Panc1 (cell line): ENCODE measurements at regions of chr1 and their contacts with region 1.

Region 1: GRCh38 chr1:46948629-46949274 is 7.5 kb upstream of the CYP4A11 start:
- DNase-seq: no peak
- ATAC-seq: no peak
- H3K4me3 ChIP-seq: no peak overlapping the region
- H3K27ac ChIP-seq: no peak overlapping the region
- H3K4me1 ChIP-seq: no peaks in the 10 kb centered on the region
- H3K27me3 ChIP-seq: no peaks in the 10 kb centered on the region; the same call in 1 of the 2 replicates
- CTCF ChIP-seq: no peak

Region 2: GRCh38 chr1:46653405-46653958 is 295.3 kb before region 1 on chr1:
- CTCF ChIA-PET with region 1: interaction called, 10 read pairs
- POLR2A ChIA-PET with region 1: no interaction called
- in situ Hi-C with region 1: no loop called
- intact Hi-C with region 1: no loop called
- DNase-seq: no peak
- ATAC-seq: no peak
- H3K4me3 ChIP-seq: no peak overlapping the region
- H3K27ac ChIP-seq: peak overlapping the region; percentile 52
- H3K4me1 ChIP-seq: peaks cover 5% of the 10 kb centered on the region; the same call in 1 of the 2 replicates
- H3K27me3 ChIP-seq: no peaks in the 10 kb centered on the region
- CTCF ChIP-seq: no peak

Region 3: DNA sequence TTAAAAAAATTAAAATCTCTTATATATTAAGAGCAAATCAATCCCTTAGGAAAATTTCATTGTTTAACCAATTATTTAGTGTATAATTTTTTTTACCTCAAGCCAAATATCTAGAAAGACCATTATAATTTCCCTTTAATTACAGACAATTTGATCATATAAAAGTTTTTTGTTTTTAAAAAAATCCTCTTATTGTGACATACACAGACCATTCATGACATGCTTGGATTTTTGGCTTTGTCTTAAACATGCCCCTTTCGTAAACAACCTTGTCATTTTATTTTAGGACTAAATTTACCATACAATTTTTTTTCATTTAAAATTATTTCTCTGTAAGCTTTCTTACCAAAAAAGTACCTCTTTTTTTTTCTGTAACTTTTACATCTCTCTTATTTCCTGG is 164.1 kb before region 1 on chr1:
- CTCF ChIA-PET with region 1: no interaction called
- POLR2A ChIA-PET with region 1: no interaction called
- in situ Hi-C with region 1: no loop called
- intact Hi-C with region 1: no loop called
- DNase-seq: no peak
- ATAC-seq: no peak
- H3K4me3 ChIP-seq: no peak overlapping the region
- H3K27ac ChIP-seq: no peak overlapping the region
- H3K4me1 ChIP-seq: no peaks in the 10 kb centered on the region
- H3K27me3 ChIP-seq: no peaks in the 10 kb centered on the region
- CTCF ChIP-seq: no peak

Region 4: DNA sequence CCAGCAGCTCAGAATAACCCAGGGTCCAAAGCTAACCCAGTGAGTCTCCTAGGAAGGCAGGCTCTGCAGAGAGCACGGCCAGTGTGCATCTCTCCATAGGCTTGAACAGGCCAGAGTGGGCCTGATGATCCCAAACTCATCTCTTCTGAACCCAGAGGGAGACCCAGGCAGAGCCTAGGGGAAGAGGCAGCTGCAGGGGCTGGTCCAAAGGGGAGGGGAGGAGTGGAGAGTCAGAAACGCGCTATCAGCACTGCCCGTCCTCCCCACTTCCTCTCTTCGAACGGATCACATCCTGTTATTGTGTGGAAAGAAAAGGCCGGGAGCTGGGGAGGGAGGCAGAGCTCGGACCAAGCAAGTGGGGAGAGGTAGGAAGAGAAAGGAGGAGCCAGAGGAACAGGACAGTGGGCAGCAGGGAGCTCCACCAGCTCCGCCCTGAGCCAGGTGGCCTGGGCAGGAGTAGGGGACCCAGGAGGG is 263.1 kb after region 1 on chr1:
- CTCF ChIA-PET with region 1: no interaction called
- POLR2A ChIA-PET with region 1: no interaction called
- in situ Hi-C with region 1: no loop called
- intact Hi-C with region 1: no loop called
- DNase-seq: no peak
- ATAC-seq: no peak
- H3K4me3 ChIP-seq: no peak overlapping the region
- H3K27ac ChIP-seq: no peak overlapping the region
- H3K4me1 ChIP-seq: no peaks in the 10 kb centered on the region
- H3K27me3 ChIP-seq: no peaks in the 10 kb centered on the region
- CTCF ChIP-seq: no peak